HepG2 (cell line): ENCODE measurements at regions of chr15 and their contacts with region 1.

Region 1: DNA sequence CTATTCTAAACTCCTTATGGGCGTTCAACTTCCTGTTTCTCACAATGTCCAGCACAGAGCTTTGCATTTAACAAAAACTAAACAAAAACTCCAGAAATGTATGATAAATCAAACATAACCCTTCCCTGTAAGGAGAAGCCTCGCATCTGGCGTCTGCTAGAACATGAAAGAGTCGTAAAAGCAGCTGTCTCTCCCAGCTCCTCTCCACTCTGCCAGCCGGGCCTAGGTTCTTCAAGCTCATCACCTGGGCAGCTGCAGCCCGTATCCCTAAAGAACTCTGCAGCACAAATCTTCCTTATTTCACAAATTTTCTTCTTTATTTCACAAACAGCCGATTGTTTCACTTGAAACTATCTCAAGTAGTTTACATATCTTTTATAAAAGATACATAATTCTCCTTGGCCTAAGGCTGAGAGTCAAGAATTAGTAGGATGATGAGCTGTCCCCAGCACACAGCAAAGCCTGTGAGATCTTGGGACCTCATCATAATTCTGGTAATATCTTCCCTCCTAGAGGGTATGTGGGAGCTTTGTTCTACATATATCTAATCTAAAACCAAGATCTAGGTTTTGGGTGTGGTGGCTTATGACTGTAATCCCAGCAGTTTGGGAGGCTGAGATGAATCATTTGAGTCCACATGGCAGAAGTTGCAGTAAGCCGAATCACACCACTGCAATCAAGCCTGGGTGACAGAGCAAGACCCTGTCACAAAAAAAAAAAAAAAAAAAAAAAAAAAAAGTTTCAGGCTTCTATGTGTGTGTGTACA is 35.3 kb downstream of the ANXA2 start:
- DNase-seq: peak; percentile 11
- ATAC-seq: no peak
- H3K4me3 ChIP-seq: no peak overlapping the region
- H3K27ac ChIP-seq: no peak overlapping the region
- H3K4me1 ChIP-seq: no peaks in the 10 kb centered on the region
- H3K27me3 ChIP-seq: no peaks in the 10 kb centered on the region
- CTCF ChIP-seq: no peak
- EP300 ChIP-seq: no peak
- POLR2A ChIP-seq: no peak
- RAD21 ChIP-seq: no peak

Region 2: DNA sequence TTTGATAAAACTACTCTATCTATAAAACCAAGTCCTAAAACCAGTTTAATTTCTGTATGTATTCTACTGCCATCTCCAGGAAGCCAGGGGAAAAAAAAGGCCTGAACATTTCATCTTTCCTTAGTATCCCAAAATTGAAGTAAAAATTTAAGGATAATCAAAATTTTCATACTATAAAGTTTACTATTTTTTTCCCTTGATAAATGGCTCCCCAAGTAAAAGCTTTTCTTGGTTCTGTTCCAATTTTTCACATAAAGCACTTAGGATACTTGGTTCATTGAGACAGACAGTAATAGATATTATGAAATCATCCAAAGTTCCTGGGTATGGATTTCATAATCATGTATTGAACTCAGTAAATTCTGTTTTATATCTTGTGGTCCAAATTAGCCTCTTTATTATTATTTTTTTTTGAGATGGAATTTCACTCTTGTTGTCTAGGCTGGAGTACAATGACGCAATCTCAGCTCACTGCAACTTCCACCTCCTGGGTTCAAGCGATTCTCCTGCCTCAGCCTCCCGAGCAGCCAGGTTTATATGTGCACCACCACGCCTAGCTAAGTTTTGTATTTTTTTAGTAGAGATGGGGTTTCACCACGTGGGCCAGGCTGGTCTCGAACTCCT is 81.9 kb after region 1 on chr15:
- CTCF ChIA-PET with region 1: interaction called, 34 read pairs
- POLR2A ChIA-PET with region 1: no interaction called
- in situ Hi-C with region 1: loop called (anchors 5 kb)
- intact Hi-C with region 1: loop called (anchors 1 kb)
- DNase-seq: peak; percentile 28
- ATAC-seq: no peak
- H3K4me3 ChIP-seq: no peak overlapping the region
- H3K27ac ChIP-seq: no peak overlapping the region
- H3K4me1 ChIP-seq: peaks cover 27% of the 10 kb centered on the region
- H3K27me3 ChIP-seq: no peaks in the 10 kb centered on the region
- CTCF ChIP-seq: peak; percentile 27
- EP300 ChIP-seq: no peak
- POLR2A ChIP-seq: no peak
- RAD21 ChIP-seq: peak; percentile 16; the same call in 1 of the 2 replicates

Region 3: DNA sequence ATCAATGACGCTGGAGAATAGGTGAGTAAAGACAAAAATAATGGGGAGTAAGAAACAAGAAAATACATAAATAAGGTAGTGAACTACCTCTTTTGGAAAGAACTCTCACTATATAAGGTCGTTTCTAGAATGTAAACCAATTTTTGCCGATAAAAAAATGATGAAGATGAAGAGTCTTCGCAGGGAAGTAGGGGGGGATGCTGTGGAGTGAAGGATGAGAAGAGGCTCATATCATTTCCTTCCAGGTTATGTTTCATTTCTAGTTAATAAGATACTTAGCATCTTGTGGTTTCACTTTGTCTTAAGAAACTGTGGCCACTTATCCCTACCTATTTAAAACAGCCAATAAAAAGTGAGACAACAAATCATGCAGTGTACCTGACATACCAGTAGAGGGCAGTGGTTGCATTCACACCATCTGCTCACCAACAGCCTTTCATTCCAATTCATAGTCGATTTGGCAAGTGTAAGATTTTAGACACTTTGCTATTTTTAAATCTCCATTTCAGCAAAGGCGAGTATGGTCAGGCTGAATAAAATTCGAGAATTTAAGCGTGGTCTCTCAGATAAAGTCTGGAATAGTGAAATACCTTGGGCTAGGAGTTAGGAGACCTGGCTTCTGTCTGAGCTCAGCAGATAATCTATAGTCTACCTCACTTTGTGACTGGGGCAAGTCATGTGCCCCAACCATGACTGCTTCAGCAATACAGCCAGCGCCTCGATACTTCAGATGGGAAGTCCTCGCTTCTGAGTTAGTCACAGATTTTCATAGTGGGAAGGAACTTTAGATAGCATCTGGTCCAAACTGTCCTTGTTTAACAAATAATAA is 145.3 kb after region 1 on chr15:
- CTCF ChIA-PET with region 1: interaction called, 3 read pairs
- POLR2A ChIA-PET with region 1: no interaction called
- in situ Hi-C with region 1: no loop called
- intact Hi-C with region 1: loop called (anchors 5 kb)
- DNase-seq: peak; percentile 43
- ATAC-seq: peak; percentile 75
- H3K4me3 ChIP-seq: no peak overlapping the region
- H3K27ac ChIP-seq: no peak overlapping the region
- H3K4me1 ChIP-seq: no peaks in the 10 kb centered on the region
- H3K27me3 ChIP-seq: no peaks in the 10 kb centered on the region
- CTCF ChIP-seq: peak; percentile 84
- EP300 ChIP-seq: no peak
- POLR2A ChIP-seq: no peak
- RAD21 ChIP-seq: peak; percentile 63

Region 4: DNA sequence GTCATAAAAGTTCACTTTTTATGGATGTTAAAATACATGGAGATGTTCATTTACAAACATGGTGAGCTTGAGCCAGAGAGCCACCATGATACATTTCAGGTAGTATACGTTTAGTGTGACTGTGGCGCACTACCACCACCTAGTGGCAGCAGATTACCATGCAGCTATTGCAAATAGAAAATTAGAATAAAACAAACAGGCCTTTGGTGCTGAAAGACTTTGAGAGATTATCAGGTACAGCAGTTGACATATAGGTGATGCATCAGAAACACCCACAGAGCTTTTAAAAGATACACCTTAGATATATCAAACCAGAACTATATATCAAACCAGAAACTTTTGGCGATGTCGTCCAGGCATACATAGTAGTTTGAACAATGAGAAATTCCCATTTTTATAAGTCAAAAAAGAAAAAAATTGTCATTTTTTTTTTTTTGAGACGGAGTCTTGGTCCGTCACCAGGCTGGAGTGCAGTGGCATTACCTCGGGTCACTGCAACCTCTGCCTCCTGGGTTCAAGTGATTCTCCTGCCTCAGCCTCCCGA is 158.4 kb after region 1 on chr15:
- CTCF ChIA-PET with region 1: interaction called, 9 read pairs
- POLR2A ChIA-PET with region 1: no interaction called
- in situ Hi-C with region 1: no loop called
- intact Hi-C with region 1: loop called (anchors 1 kb)
- DNase-seq: peak; percentile 63
- ATAC-seq: peak; percentile 77
- H3K4me3 ChIP-seq: no peak overlapping the region
- H3K27ac ChIP-seq: no peak overlapping the region
- H3K4me1 ChIP-seq: no peaks in the 10 kb centered on the region
- H3K27me3 ChIP-seq: no peaks in the 10 kb centered on the region
- CTCF ChIP-seq: peak; percentile 78
- EP300 ChIP-seq: no peak
- POLR2A ChIP-seq: no peak
- RAD21 ChIP-seq: no peak